ENCODE measurements at regions of chr6 and their contacts with region 1.

Region 1: GRCh38 chr6:79672631-79673111 is 41.5 kb downstream of the SH3BGRL2 start:
- DNase-seq: no peak
- H3K4me3 ChIP-seq: no peak overlapping the region
- CTCF ChIP-seq: peak; percentile 37

Region 2: GRCh38 chr6:79570129-79571029 is 102.3 kb before region 1 on chr6:
- CTCF ChIA-PET with region 1: interaction called, 21 read pairs
- POLR2A ChIA-PET with region 1: no interaction called
- DNase-seq: no peak
- H3K4me3 ChIP-seq: no peak overlapping the region
- CTCF ChIP-seq: peak; percentile 31

Measured in AG04449 (cell line).